Natural killer cell (primary cell): ENCODE measurements at regions of chr17 and their contacts with region 1.

Region 1: GRCh38 chr17:34361478-34362061 is 1.5 kb downstream of the CCL1 start:
- DNase-seq: peak; percentile 27 to 70
- ATAC-seq: peak; percentile 50 to 82 (median 64)
- H3K4me3 ChIP-seq: no peak overlapping the region
- H3K4me3 Mint-ChIP-seq: no peak overlapping the region
- H3K27ac ChIP-seq: no peak overlapping the region
- H3K27ac Mint-ChIP-seq: no peak overlapping the region
- H3K4me1 ChIP-seq: peaks cover 9% of the 10 kb centered on the region
- H3K4me1 Mint-ChIP-seq: peaks cover 0 to 7% of the 10 kb centered on the region in 2 donors
- H3K27me3 ChIP-seq: no peaks in the 10 kb centered on the region
- H3K27me3 Mint-ChIP-seq: peaks cover 7% of the 10 kb centered on the region in 2 donors
- CTCF ChIP-seq: peak; percentile 30

Region 2: GRCh38 chr17:34199932-34200534 is 161.5 kb before region 1 on chr17:
- intact Hi-C with region 1: loop called (anchors 5 kb)
- DNase-seq: peak; percentile 43 to 86
- ATAC-seq: peak; percentile 92 to 100 (median 95)
- H3K4me3 ChIP-seq: no peak overlapping the region
- H3K4me3 Mint-ChIP-seq: no peak overlapping the region
- H3K27ac ChIP-seq: no peak overlapping the region
- H3K27ac Mint-ChIP-seq: no peak overlapping the region
- H3K4me1 ChIP-seq: no peaks in the 10 kb centered on the region
- H3K4me1 Mint-ChIP-seq: peaks cover 0 to 7% of the 10 kb centered on the region in 2 donors
- H3K27me3 ChIP-seq: no peaks in the 10 kb centered on the region
- H3K27me3 Mint-ChIP-seq: peaks cover 13 to 31% of the 10 kb centered on the region in 2 donors
- CTCF ChIP-seq: peak; percentile 100

Region 3: DNA sequence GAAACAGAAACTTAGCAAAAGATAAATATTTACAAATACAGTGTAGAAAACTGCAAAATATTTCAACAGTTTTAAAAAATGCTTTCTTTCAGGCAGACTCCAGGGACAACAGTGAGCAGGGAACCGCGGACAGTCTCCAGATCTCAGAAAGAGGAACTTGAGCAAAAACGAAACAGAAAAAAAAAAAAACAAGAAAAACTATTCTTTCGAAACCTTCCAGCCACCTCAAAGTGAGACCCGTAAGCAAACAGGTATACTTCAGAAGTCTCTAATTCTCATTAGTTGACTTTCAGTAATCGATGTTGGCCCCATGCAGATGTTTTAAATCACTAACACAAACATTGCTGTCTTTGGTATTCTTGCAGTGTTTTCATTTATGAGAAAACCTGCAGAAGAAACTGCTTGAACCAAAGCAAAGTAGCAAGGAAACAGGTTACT is 17.1 kb after region 1 on chr17:
- intact Hi-C with region 1: no loop called
- DNase-seq: peak in 1 of 2 donors; percentile 8
- ATAC-seq: peak in 2 of 3 donors; percentile 34 to 57
- H3K4me3 ChIP-seq: no peak overlapping the region
- H3K4me3 Mint-ChIP-seq: peak overlapping the region; percentile 61
- H3K27ac ChIP-seq: no peak overlapping the region
- H3K27ac Mint-ChIP-seq: no peak overlapping the region
- H3K4me1 ChIP-seq: no peaks in the 10 kb centered on the region
- H3K4me1 Mint-ChIP-seq: peaks cover 0 to 10% of the 10 kb centered on the region in 2 donors
- H3K27me3 ChIP-seq: no peaks in the 10 kb centered on the region
- H3K27me3 Mint-ChIP-seq: peaks cover 4 to 14% of the 10 kb centered on the region in 2 donors
- CTCF ChIP-seq: no peak

Region 4: DNA sequence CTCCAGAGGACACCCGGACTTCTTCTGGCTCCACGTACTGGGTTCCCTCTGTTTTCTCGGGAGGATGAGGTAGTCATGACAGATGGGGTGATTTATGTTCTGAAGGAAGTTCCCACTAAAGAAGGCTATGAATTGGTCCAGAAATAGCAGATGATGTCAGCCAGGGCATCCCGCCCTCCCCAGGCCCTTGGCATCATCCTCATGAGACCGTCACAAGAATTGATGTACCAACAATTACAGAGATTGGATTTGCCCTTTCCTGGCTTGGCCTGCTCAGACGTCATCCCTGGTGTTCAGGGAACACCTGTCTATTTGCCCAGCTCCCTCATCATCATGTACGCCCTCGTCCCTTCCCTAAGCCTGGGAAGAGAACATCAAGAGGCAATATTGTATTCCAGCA is 104.2 kb after region 1 on chr17:
- intact Hi-C with region 1: no loop called
- DNase-seq: no peak
- ATAC-seq: no peak
- H3K4me3 ChIP-seq: no peak overlapping the region
- H3K4me3 Mint-ChIP-seq: no peak overlapping the region
- H3K27ac ChIP-seq: no peak overlapping the region
- H3K27ac Mint-ChIP-seq: no peak overlapping the region
- H3K4me1 ChIP-seq: no peaks in the 10 kb centered on the region
- H3K4me1 Mint-ChIP-seq: no peaks in the 10 kb centered on the region
- H3K27me3 ChIP-seq: no peaks in the 10 kb centered on the region
- H3K27me3 Mint-ChIP-seq: peaks cover 6 to 21% of the 10 kb centered on the region in 2 donors
- CTCF ChIP-seq: no peak